Vagina (tissue), 2 donors: ENCODE measurements at regions of chr1 and their contacts with region 1.

Region 1: GRCh38 chr1:94801919-94802546 is 18.1 kb upstream of the SLC44A3 start:
- DNase-seq: no peak
- H3K4me3 ChIP-seq: peak overlapping the region in 1 of 2 donors; percentile 12
- H3K27ac ChIP-seq: peak overlapping the region; percentile 81
- H3K4me1 ChIP-seq: peaks cover 24% of the 10 kb centered on the region
- H3K27me3 ChIP-seq: no peaks in the 10 kb centered on the region
- CTCF ChIP-seq: peak in 2 of 3 experiments; percentile 39 to 42
- POLR2A ChIP-seq: no peak

Region 2: DNA sequence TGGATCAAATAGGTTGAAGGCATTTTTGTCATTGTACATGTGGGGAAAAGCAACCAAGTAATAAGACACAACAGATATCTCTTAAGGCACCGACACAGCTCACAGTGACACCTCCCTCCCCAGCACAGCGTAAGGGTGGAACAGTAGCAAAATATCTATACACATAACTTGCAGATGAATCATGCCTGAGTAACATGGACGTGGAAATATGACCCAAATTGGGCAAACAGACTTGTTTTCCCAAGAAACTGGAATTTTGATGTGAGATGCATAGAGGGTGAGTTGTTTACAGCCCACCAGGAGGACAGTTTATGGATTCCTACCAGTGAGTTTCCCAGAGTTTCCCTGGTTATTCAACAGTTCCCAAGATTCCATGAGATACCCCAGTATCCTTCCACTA is 1463.6 kb before region 1 on chr1:
- intact Hi-C with region 1: no loop called
- DNase-seq: no peak
- H3K4me3 ChIP-seq: no peak overlapping the region
- H3K27ac ChIP-seq: no peak overlapping the region
- H3K4me1 ChIP-seq: no peaks in the 10 kb centered on the region
- H3K27me3 ChIP-seq: no peaks in the 10 kb centered on the region
- CTCF ChIP-seq: no peak
- POLR2A ChIP-seq: no peak

Region 3: DNA sequence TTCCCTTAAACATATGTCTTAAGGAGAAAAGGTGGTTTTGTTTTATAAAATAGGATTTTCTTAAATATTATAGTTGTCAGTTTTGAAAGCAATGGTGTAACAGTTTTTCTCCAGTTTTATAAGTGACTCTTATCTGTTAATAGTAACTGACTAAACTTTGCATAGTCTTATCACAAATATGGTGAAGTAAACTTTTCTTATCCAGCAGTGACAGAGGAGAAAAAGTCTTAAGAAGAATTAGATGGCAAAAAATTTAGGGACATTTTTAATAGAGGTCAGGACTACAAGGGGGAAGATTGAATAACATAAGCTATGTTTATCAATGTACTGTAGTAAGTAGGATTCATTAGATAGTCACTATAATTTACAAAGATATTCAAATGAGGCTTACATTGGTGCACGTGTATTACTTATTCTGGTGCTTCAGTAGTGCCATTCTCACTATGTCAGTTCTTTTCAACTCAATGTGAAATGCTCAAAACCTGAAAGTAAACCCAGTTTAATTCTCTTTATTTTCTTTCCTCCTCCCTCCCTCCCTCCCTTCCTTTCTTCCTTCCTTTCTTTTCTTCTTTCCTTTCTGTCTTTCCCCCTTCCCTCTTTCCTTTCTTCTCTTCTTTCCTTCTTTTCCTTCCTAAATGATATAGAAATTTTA is 286.6 kb before region 1 on chr1:
- intact Hi-C with region 1: loop called (anchors 5 kb)
- DNase-seq: no peak
- H3K4me3 ChIP-seq: no peak overlapping the region
- H3K27ac ChIP-seq: no peak overlapping the region
- H3K4me1 ChIP-seq: no peaks in the 10 kb centered on the region
- H3K27me3 ChIP-seq: no peaks in the 10 kb centered on the region
- CTCF ChIP-seq: no peak
- POLR2A ChIP-seq: no peak

Region 4: DNA sequence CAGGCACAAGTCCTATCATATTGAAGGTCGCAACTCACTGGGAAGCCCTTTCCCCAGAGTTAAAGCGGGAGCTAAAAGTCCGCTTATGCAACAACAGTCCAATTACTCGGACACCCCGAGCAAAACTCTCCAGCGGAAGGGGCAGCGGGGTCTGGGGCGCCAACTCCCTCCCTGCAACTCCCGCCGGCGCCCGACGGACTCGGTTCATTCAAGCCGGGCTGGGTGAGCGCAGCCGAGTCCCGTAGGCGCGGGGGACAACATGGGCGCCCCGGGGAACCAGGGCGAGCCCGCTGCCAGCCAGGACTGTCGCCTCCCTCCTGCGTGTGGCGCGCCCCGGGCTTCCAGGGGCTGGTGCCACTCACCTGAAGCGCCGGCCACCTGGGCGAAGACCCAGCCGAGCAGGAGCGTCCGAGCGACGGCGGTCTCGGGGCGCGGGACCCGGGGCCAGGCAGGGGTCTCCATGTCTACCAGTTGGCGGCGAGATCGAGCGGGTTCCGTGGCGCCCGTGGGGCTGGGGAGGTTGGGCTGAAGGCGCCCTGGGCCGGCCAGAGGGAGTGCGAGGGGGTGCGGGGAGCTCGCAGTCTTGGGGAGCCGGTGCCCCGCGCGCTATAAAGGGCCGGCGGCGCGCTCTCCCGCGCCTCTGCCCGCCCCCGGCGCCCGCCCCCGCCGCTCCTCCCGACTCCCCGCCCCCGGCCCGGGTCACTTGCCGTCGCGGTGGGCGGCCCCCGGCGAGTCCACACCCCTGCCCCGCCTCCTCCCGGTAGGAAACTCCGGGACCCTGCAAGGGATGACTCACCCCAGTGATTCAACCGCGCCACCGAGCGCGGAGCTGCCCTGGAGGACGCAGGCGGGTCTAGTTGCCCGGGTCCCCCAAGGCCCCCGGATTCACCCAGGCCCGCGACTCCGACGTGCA is 260.6 kb before region 1 on chr1 and contains the start of gene F3:
- intact Hi-C with region 1: loop called (anchors 5 kb)
- DNase-seq: peak in 1 of 2 donors; percentile 94
- H3K4me3 ChIP-seq: peak within 1 kb of the TSS; percentile 70 to 76
- H3K27ac ChIP-seq: peak within 1 kb of the TSS; percentile 88
- H3K4me1 ChIP-seq: peaks cover 39% of the 10 kb centered on the region
- H3K27me3 ChIP-seq: no peaks in the 10 kb centered on the region
- CTCF ChIP-seq: no peak
- POLR2A ChIP-seq: peak in 1 of 2 donors; percentile 91
- total RNA-seq, gene F3: 63.6 TPM